Panc1 (cell line): ENCODE measurements at regions of chr13 and their contacts with region 1.

Region 1: GRCh38 chr13:101757446-101758039 is 305.1 kb downstream of the ITGBL1 start:
- DNase-seq: peak; percentile 13
- ATAC-seq: peak; percentile 81; the same call in 1 of the 2 replicates
- H3K4me3 ChIP-seq: no peak overlapping the region
- H3K27ac ChIP-seq: no peak overlapping the region
- H3K4me1 ChIP-seq: no peaks in the 10 kb centered on the region; the same call in 1 of the 2 replicates
- H3K27me3 ChIP-seq: no peaks in the 10 kb centered on the region
- CTCF ChIP-seq: peak; percentile 46; the same call in 1 of the 2 replicates

Region 2: DNA sequence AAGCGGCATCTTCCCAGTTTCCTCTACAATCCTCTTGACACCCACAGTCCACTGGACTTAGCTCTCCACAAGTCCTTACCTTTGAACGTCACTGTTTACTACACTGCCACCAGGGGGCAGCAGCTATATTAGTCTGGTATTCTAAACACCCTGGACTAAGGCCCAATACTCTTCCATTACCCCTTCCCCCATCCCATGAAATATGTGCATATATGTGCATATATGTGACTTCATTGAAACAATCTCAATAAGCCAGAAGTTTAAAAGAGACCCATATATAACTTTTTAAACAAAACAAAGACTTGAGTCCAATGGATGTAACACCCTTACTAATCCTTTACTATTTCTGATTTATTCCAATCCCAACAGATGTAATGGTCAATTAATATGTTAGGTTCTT is 1184.4 kb before region 1 on chr13:
- CTCF ChIA-PET with region 1: interaction called, 10 read pairs
- POLR2A ChIA-PET with region 1: no interaction called
- in situ Hi-C with region 1: no loop called
- intact Hi-C with region 1: no loop called
- DNase-seq: peak; percentile 48
- ATAC-seq: peak; percentile 87
- H3K4me3 ChIP-seq: no peak overlapping the region
- H3K27ac ChIP-seq: no peak overlapping the region
- H3K4me1 ChIP-seq: no peaks in the 10 kb centered on the region
- H3K27me3 ChIP-seq: no peaks in the 10 kb centered on the region
- CTCF ChIP-seq: peak; percentile 70

Region 3: DNA sequence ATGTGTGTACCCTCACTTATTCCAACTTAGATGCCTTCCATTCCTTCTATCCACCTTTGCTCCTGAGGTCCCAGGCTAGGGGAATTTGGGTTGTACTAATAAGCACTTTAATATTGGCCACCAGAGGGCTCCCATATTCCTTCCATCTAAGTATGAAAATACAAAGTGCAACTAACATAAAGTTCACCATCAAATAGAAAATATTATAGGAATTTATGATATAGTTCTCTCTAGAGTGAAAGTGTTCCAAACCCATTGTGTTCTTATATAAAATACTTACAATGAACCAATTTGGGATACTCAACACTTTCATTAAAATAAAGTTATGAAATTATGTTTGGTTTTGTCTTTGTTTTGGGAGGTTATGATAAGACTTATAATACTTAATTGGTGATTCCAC is 242.8 kb before region 1 on chr13:
- CTCF ChIA-PET with region 1: interaction called, 4 read pairs
- POLR2A ChIA-PET with region 1: no interaction called
- in situ Hi-C with region 1: no loop called
- intact Hi-C with region 1: loop called (anchors 1 kb)
- DNase-seq: no peak
- ATAC-seq: peak; percentile 72
- H3K4me3 ChIP-seq: no peak overlapping the region
- H3K27ac ChIP-seq: no peak overlapping the region
- H3K4me1 ChIP-seq: no peaks in the 10 kb centered on the region; the same call in 1 of the 2 replicates
- H3K27me3 ChIP-seq: no peaks in the 10 kb centered on the region
- CTCF ChIP-seq: peak; percentile 58; the same call in 1 of the 2 replicates

Region 4: DNA sequence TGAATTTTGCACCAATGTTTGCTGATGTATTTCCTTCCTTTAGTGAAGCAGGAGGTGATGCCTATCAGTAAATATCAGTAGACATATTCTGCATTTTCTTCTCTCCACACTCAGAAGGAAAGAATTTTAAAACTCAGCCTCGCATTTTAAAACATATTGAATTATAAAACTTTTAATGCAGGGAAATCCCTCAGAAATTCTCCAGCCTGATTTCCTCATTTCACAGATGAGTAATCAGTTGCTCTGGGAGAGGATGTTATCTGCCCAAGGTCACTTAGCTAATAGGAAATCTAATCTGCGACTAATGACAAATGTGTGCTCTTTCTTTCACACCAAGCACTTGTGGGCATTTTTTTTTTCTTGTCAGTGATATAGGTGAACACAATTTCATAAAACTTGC is 15.5 kb after region 1 on chr13:
- CTCF ChIA-PET with region 1: no interaction called
- POLR2A ChIA-PET with region 1: no interaction called
- in situ Hi-C with region 1: no loop called
- intact Hi-C with region 1: no loop called
- DNase-seq: no peak
- ATAC-seq: no peak
- H3K4me3 ChIP-seq: no peak overlapping the region
- H3K27ac ChIP-seq: no peak overlapping the region
- H3K4me1 ChIP-seq: no peaks in the 10 kb centered on the region
- H3K27me3 ChIP-seq: no peaks in the 10 kb centered on the region
- CTCF ChIP-seq: no peak